CD14-positive monocyte (primary cell): ENCODE measurements at regions of chr22 and their contacts with region 1.

Region 1: DNA sequence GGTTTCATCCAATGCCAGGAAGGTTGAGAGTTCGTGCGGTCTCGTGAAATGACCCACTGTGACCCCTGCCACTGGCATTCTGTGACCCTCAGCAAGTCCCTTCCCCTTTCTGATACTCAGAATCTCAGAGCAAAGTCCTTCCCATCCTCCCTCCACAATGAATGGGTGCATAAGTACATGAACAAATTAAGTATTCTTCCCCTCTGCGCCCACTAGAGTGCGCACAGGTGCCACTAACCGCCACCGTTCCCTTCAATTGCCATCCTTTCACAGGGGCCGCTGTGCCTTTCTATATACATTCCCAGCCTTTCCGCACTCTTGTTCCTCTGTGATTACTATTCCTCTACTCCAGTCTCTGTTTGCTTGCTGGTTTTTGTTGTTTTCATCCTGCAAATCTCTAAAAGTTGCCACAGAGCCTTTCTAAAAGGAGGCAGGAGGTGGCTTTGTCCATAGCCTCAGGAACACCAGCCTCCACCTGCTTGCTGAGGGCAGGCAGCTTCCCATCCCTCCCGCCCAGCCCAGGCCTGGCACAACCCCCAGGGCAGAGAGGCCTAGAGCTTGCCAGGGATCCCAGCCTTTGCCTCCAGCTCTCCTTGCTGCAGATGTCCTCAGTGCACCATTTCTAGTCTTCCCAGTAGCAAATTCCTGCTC is 6.7 kb upstream of the AP1B1 start:
- DNase-seq: peak; percentile 61 to 73 (median 67)
- H3K4me3 ChIP-seq: no peak overlapping the region
- H3K4me3 Mint-ChIP-seq: no peak overlapping the region
- H3K27ac ChIP-seq: no peak overlapping the region
- H3K27ac Mint-ChIP-seq: no peak overlapping the region
- H3K4me1 ChIP-seq: peaks cover 13% of the 10 kb centered on the region in 2 donors
- H3K4me1 Mint-ChIP-seq: peaks cover 17% of the 10 kb centered on the region
- H3K27me3 ChIP-seq: no peaks in the 10 kb centered on the region
- H3K27me3 Mint-ChIP-seq: peaks cover 0 to 2% (median 2%) of the 10 kb centered on the region in 3 donors
- CTCF ChIP-seq: peak; percentile 85

Region 2: GRCh38 chr22:29330753-29331152 is 64.3 kb before region 1 on chr22:
- intact Hi-C with region 1: no loop called
- DNase-seq: no peak
- H3K4me3 ChIP-seq: no peak overlapping the region
- H3K4me3 Mint-ChIP-seq: no peak overlapping the region
- H3K27ac ChIP-seq: no peak overlapping the region
- H3K27ac Mint-ChIP-seq: peak overlapping the region in 3 of 7 donors; percentile 18 to 49 (median 30)
- H3K4me1 ChIP-seq: no peaks in the 10 kb centered on the region
- H3K4me1 Mint-ChIP-seq: no peaks in the 10 kb centered on the region
- H3K27me3 ChIP-seq: no peaks in the 10 kb centered on the region
- H3K27me3 Mint-ChIP-seq: peaks cover 0 to 2% (median 0%) of the 10 kb centered on the region in 3 donors
- CTCF ChIP-seq: no peak

Region 3: GRCh38 chr22:29380181-29380681 is 14.8 kb before region 1 on chr22:
- intact Hi-C with region 1: no loop called
- DNase-seq: no peak
- H3K4me3 ChIP-seq: no peak overlapping the region
- H3K4me3 Mint-ChIP-seq: no peak overlapping the region
- H3K27ac ChIP-seq: peak overlapping the region in 1 of 2 donors; percentile 17
- H3K27ac Mint-ChIP-seq: peak overlapping the region in 3 of 7 donors; percentile 16 to 69 (median 23)
- H3K4me1 ChIP-seq: peaks cover 31% of the 10 kb centered on the region in 2 donors
- H3K4me1 Mint-ChIP-seq: peaks cover 52% of the 10 kb centered on the region
- H3K27me3 ChIP-seq: no peaks in the 10 kb centered on the region
- H3K27me3 Mint-ChIP-seq: peaks cover 0 to 3% (median 0%) of the 10 kb centered on the region in 3 donors
- CTCF ChIP-seq: no peak

Region 4: DNA sequence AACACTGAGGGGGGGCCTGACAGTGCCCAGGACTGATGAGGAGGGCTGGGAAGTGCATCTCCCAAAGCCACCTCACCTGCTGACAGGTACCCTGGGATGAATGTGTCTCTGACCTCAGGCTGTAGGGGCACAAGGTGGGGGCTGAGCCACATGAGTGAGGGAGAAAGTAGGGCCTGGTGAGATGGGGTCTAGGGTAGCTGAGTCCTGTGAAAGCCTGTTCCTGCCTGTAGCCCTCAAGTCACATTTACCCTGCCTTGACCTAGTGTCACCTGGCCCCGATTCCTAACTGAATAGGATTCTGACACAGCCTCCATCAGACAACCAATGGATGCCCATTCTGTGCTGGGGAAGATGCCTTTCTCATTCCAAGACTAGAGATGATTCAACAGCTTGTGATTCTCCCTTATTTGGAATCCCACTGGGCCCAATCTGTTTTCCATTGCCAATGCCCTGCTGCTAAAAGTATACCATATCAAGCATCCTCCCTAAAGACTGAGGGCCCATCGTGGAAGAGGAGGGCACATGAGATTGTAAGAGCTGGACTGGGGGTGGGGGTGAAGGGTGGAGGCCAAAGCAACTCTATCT is 32.2 kb after region 1 on chr22:
- intact Hi-C with region 1: no loop called
- DNase-seq: no peak
- H3K4me3 ChIP-seq: no peak overlapping the region
- H3K4me3 Mint-ChIP-seq: no peak overlapping the region
- H3K27ac ChIP-seq: no peak overlapping the region
- H3K27ac Mint-ChIP-seq: no peak overlapping the region
- H3K4me1 ChIP-seq: no peaks in the 10 kb centered on the region
- H3K4me1 Mint-ChIP-seq: no peaks in the 10 kb centered on the region
- H3K27me3 ChIP-seq: peaks cover 0 to 2% of the 10 kb centered on the region in 2 donors
- H3K27me3 Mint-ChIP-seq: peaks cover 5 to 18% (median 5%) of the 10 kb centered on the region in 3 donors
- CTCF ChIP-seq: no peak

Region 5: DNA sequence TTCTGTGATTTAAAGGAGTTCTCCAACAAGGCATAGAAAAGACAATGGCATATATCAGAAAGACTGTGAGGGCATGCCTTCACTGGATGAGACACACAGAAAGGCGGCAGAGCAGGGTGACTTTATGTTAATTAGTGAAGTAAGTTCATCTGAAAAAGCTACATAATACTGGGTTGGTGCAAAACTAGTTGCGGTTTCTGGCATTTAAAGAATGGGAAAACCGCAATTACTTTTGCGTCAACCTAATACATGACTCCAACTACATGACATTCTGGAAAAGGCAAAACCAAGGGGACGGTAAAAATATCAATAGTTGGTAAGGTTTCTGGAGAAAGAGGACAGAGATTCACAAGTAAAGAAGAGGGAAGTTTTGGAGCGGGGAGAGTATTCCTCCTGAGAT is 48.4 kb after region 1 on chr22:
- intact Hi-C with region 1: no loop called
- DNase-seq: no peak
- H3K4me3 ChIP-seq: no peak overlapping the region
- H3K4me3 Mint-ChIP-seq: no peak overlapping the region
- H3K27ac ChIP-seq: no peak overlapping the region
- H3K27ac Mint-ChIP-seq: no peak overlapping the region
- H3K4me1 ChIP-seq: no peaks in the 10 kb centered on the region
- H3K4me1 Mint-ChIP-seq: no peaks in the 10 kb centered on the region
- H3K27me3 ChIP-seq: no peaks in the 10 kb centered on the region
- H3K27me3 Mint-ChIP-seq: peaks cover 2 to 5% (median 4%) of the 10 kb centered on the region in 3 donors
- CTCF ChIP-seq: no peak

Region 6: DNA sequence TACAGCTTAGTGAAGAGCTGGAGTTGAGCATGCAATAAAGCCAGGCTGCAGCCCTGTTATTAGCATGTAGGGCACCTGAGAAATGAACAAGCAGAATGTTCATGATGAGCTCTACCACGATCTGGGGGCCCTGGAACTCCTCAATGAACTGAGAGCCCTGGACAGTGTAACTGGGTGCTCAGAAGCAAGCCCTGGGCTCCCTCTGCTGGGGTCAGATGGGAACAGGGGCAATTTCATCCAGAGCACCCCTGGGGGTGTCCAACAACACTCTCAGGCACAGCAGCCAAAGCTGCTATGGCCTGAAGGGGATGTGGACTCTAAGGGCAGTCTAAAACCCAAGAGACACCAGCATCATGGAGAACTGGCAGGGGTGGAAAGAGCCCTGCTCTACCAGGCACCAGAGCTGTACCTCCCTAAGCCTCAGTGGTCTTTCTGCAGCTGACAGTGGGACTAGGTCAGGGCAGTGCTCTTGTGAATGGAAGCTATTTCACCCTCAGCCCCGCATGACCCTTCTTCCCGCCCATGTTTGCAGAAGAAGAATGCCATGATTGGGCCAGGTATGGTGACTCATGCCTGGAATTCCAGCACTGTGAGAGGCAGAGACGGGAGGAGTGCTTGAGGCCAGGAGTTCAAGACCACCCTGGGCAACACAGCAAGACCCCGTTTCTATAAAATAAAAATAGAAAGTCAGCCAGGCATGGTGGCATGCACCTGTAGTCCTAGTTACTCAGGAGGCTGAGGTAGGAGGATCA is 129.6 kb after region 1 on chr22:
- intact Hi-C with region 1: loop called (anchors 10 kb)
- DNase-seq: peak in 1 of 3 donors; percentile 15
- H3K4me3 ChIP-seq: no peak overlapping the region
- H3K4me3 Mint-ChIP-seq: no peak overlapping the region
- H3K27ac ChIP-seq: no peak overlapping the region
- H3K27ac Mint-ChIP-seq: no peak overlapping the region
- H3K4me1 ChIP-seq: no peaks in the 10 kb centered on the region
- H3K4me1 Mint-ChIP-seq: no peaks in the 10 kb centered on the region
- H3K27me3 ChIP-seq: no peaks in the 10 kb centered on the region
- H3K27me3 Mint-ChIP-seq: no peaks in the 10 kb centered on the region
- CTCF ChIP-seq: peak; percentile 24